ENCODE measurements at regions of chr2 and their contacts with region 1.

Region 1: GRCh38 chr2:148989882-148990493 is 48.5 kb upstream of the LYPD6B start:
- DNase-seq: peak in 3 of 6 donors; percentile 40 to 67 (median 50)
- ATAC-seq: peak; percentile 87 to 98 (median 94)
- H3K4me3 ChIP-seq: no peak overlapping the region
- H3K27ac ChIP-seq: no peak overlapping the region
- H3K4me1 ChIP-seq: no peaks in the 10 kb centered on the region
- H3K27me3 ChIP-seq: no peaks in the 10 kb centered on the region
- CTCF ChIP-seq: peak; percentile 17 to 62 (median 41)

Region 2: GRCh38 chr2:147937744-147938349 is 1052.1 kb before region 1 on chr2:
- intact Hi-C with region 1: loop called in 1 of 3 experiments (anchors 10 kb)
- DNase-seq: no peak
- ATAC-seq: peak; percentile 69 to 92 (median 88)
- H3K4me3 ChIP-seq: no peak overlapping the region
- H3K27ac ChIP-seq: no peak overlapping the region
- H3K4me1 ChIP-seq: no peaks in the 10 kb centered on the region
- H3K27me3 ChIP-seq: no peaks in the 10 kb centered on the region
- CTCF ChIP-seq: peak; percentile 61 to 84 (median 66)

Region 3: GRCh38 chr2:148263890-148264289 is 726.1 kb before region 1 on chr2:
- intact Hi-C with region 1: no loop called
- DNase-seq: no peak
- ATAC-seq: no peak
- H3K4me3 ChIP-seq: no peak overlapping the region
- H3K27ac ChIP-seq: no peak overlapping the region
- H3K4me1 ChIP-seq: no peaks in the 10 kb centered on the region
- H3K27me3 ChIP-seq: no peaks in the 10 kb centered on the region
- CTCF ChIP-seq: no peak

Region 4: GRCh38 chr2:149132339-149132738 is 142.4 kb after region 1 on chr2:
- intact Hi-C with region 1: no loop called
- DNase-seq: no peak
- ATAC-seq: no peak
- H3K4me3 ChIP-seq: no peak overlapping the region
- H3K27ac ChIP-seq: no peak overlapping the region
- H3K4me1 ChIP-seq: no peaks in the 10 kb centered on the region
- H3K27me3 ChIP-seq: no peaks in the 10 kb centered on the region
- CTCF ChIP-seq: no peak

Region 5: DNA sequence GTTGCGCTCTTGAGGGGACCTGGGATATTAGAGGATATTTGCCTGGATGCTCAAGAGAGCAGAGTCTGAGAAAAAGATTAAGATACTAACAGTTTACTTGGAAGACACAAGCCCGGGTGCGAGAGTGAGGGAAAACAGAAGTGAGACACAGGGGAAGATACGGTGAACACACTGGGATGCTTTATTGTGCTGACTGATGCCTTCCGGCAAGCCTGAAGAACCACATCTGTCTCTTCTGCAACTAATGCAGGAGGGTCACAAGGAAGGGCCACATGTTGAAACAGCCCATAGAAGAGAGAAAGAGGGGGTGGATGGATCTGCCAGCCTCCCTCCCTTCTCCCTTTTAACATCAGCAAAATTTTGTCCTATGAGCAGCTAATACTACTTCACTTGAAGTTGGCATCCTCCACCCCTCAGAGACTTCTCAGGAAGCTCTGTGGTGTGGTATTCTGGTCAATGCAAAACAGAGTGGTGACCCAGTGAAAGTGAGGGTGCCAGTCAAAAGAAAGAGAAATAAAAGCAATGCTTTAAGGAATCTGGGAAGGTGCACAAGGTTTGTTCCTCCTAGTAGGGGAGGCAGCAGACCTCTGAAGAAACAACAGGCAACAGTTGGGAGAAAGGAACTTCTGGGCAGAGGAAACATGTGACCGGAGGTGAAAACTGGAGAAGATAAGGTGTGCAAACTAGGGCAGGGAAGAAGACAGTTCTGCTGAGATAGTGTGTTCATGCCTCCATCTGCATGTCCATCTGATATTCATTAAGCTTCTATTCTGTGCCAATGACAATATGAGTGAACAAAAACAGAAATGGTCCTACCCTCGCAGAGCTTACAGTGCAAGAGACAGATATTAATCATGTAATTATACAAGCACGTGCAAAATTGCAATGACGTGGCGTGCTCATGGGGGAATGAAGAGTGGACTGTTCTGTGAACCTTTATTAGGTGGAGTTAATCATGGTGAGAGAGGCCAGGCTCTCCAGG is 155.6 kb after region 1 on chr2:
- intact Hi-C with region 1: no loop called
- DNase-seq: no peak
- ATAC-seq: no peak
- H3K4me3 ChIP-seq: no peak overlapping the region
- H3K27ac ChIP-seq: no peak overlapping the region
- H3K4me1 ChIP-seq: no peaks in the 10 kb centered on the region
- H3K27me3 ChIP-seq: no peaks in the 10 kb centered on the region
- CTCF ChIP-seq: no peak

Region 6: GRCh38 chr2:150824118-150824517 is 1834.1 kb after region 1 on chr2:
- intact Hi-C with region 1: no loop called
- DNase-seq: no peak
- ATAC-seq: no peak
- H3K4me3 ChIP-seq: no peak overlapping the region
- H3K27ac ChIP-seq: no peak overlapping the region
- H3K4me1 ChIP-seq: no peaks in the 10 kb centered on the region
- H3K27me3 ChIP-seq: no peaks in the 10 kb centered on the region
- CTCF ChIP-seq: no peak